ENCODE measurements at regions of chr11 and their contacts with region 1.

Region 1: DNA sequence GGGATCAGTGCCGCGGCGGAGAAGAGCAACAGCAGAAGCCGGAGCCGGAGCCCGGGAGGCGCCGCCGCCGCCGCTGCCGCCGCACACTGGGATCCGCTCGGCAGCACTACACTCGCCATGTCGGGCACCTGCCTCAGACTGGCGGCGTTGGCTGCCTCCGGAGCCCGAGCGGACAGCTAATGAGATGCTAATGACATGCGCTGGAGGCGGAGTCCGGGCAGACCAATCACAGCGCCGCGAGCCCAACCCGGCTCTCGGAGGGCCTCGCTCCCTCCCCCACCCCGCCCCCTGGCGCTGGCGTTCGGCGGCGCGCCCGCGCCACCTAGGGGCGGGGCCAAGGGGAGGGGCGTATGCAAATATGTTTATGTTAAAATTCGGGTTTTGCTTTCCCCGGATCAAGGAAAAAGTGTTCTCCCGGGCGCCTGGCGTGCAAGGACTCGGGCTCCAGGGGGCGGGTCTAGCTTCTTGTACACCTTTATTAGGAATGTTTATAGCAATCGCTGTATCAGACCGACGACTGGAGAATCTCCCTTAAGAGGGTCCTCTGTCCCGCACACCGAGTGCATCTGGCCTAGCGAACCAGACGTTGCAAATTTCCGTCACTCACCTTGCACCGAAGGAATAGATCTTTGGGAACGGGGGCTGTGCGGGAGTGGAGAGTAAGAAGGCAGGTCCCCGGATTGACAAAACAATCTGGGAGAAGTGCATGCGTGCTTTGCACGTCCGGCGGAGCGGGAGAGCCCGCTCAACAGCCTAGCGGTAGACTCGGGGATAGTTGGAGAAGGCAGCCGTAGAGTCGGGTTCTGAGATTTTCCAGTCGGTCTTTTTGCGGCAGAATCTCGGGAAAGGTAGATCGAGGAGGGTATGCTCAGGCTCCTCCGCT is at the start of gene CADM1:
- DNase-seq: peak; percentile 95
- ATAC-seq: peak; percentile 94
- total RNA-seq, gene CADM1: 32.0 TPM

Region 2: GRCh38 chr11:115334932-115335788 is 169.4 kb before region 1 on chr11:
- intact Hi-C with region 1: loop called (anchors 5 kb)
- DNase-seq: no peak
- ATAC-seq: peak; percentile 49

Region 3: GRCh38 chr11:115616971-115617370 is 112.5 kb after region 1 on chr11:
- intact Hi-C with region 1: no loop called
- DNase-seq: peak; percentile 54
- ATAC-seq: no peak

Region 4: GRCh38 chr11:115672999-115673411 is 168.5 kb after region 1 on chr11:
- intact Hi-C with region 1: loop called (anchors 10 kb)
- DNase-seq: peak; percentile 46
- ATAC-seq: peak; percentile 90

Region 5: GRCh38 chr11:115707180-115707905 is 202.8 kb after region 1 on chr11:
- intact Hi-C with region 1: no loop called
- DNase-seq: no peak
- ATAC-seq: peak; percentile 53

Measured in Right ventricle myocardium superior (tissue), 1 donor.